B cell (primary cell): ENCODE measurements at regions of chr9 and their contacts with region 1.

Region 1: GRCh38 chr9:35657546-35658136 is at the start of gene RMRP:
- DNase-seq: peak; percentile 97
- ATAC-seq: peak; percentile 79
- H3K4me3 ChIP-seq: peak within 1 kb of the TSS; percentile 84 to 93 (median 87)
- H3K4me3 Mint-ChIP-seq: peak within 1 kb of the TSS; percentile 94
- H3K27ac ChIP-seq: peak within 1 kb of the TSS; percentile 99 to 100
- H3K27ac Mint-ChIP-seq: peak within 1 kb of the TSS; percentile 97
- H3K4me1 ChIP-seq: peaks cover 39 to 62% of the 10 kb centered on the region in 2 donors
- H3K4me1 Mint-ChIP-seq: peaks cover 66% of the 10 kb centered on the region
- H3K27me3 ChIP-seq: no peaks in the 10 kb centered on the region
- H3K27me3 Mint-ChIP-seq: no peaks in the 10 kb centered on the region
- CTCF ChIP-seq: no peak
- total RNA-seq, gene RMRP: 7,890 and 7,920 TPM in 2 replicates

Region 2: DNA sequence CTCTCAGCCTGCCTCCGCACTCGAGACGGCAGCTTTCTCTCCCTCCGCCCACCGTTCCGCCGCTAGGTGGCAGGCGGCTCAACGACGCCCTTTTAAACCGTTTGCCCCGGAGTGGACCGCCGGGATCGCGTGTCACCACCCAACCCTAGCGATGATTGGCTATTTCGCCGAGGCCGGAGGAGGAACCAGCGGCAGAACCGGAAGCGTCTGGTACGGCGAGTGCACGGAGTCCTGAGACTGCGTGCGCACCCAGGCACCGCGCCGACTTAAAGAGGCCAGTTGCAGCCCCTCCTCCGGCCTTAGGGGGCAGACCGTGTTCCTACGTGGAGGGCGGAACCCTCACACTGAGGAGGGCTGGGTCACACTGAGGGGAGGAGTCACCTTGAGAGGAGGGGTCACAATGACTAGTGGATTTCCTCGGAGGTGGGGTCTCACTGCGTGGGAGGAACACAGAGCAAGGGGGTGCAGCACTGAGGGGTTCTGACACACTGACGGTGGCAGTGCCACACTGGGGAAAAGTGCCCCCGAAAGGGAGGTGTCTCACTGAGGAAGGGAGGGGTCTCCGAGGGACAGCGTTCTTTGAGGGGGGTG is 53.6 kb before region 1 on chr9:
- CTCF ChIA-PET with region 1: interaction called, 357 read pairs
- POLR2A ChIA-PET with region 1: interaction called, 24 read pairs
- intact Hi-C with region 1: loop called (anchors 1 kb)
- DNase-seq: peak; percentile 100
- ATAC-seq: peak; percentile 86
- H3K4me3 ChIP-seq: peak overlapping the region; percentile 71 to 84 (median 81)
- H3K4me3 Mint-ChIP-seq: peak overlapping the region; percentile 97
- H3K27ac ChIP-seq: peak overlapping the region; percentile 80 to 84
- H3K27ac Mint-ChIP-seq: peak overlapping the region; percentile 99
- H3K4me1 ChIP-seq: peaks cover 26 to 46% of the 10 kb centered on the region in 2 donors
- H3K4me1 Mint-ChIP-seq: peaks cover 36% of the 10 kb centered on the region
- H3K27me3 ChIP-seq: no peaks in the 10 kb centered on the region
- H3K27me3 Mint-ChIP-seq: no peaks in the 10 kb centered on the region
- CTCF ChIP-seq: peak; percentile 97

Region 3: GRCh38 chr9:35616681-35617459 is 40.8 kb before region 1 on chr9:
- CTCF ChIA-PET with region 1: interaction called, 357 read pairs
- POLR2A ChIA-PET with region 1: interaction called, 18 read pairs
- intact Hi-C with region 1: loop called (anchors 1 kb)
- DNase-seq: peak; percentile 82
- ATAC-seq: peak; percentile 11
- H3K4me3 ChIP-seq: peak overlapping the region; percentile 80 to 91 (median 90)
- H3K4me3 Mint-ChIP-seq: peak overlapping the region; percentile 86
- H3K27ac ChIP-seq: peak overlapping the region; percentile 95 to 97
- H3K27ac Mint-ChIP-seq: peak overlapping the region; percentile 86
- H3K4me1 ChIP-seq: peaks cover 79 to 95% of the 10 kb centered on the region in 2 donors
- H3K4me1 Mint-ChIP-seq: peaks cover 94% of the 10 kb centered on the region
- H3K27me3 ChIP-seq: no peaks in the 10 kb centered on the region
- H3K27me3 Mint-ChIP-seq: no peaks in the 10 kb centered on the region
- CTCF ChIP-seq: peak; percentile 21

Region 4: GRCh38 chr9:35675732-35676392 is 18.2 kb after region 1 on chr9:
- CTCF ChIA-PET with region 1: interaction called, 10 read pairs
- POLR2A ChIA-PET with region 1: interaction called, 7 read pairs
- intact Hi-C with region 1: no loop called
- DNase-seq: peak; percentile 55
- ATAC-seq: peak; percentile 71
- H3K4me3 ChIP-seq: peak overlapping the region in 4 of 5 experiments; percentile 47 to 60 (median 52)
- H3K4me3 Mint-ChIP-seq: peak overlapping the region; percentile 87
- H3K27ac ChIP-seq: no peak overlapping the region
- H3K27ac Mint-ChIP-seq: no peak overlapping the region
- H3K4me1 ChIP-seq: peaks cover 21 to 29% of the 10 kb centered on the region in 2 donors
- H3K4me1 Mint-ChIP-seq: peaks cover 29% of the 10 kb centered on the region
- H3K27me3 ChIP-seq: peaks cover 0 to 14% (median 3%) of the 10 kb centered on the region in 4 experiments
- H3K27me3 Mint-ChIP-seq: peaks cover 9% of the 10 kb centered on the region
- CTCF ChIP-seq: no peak

Region 5: GRCh38 chr9:35696525-35697215 is 39.0 kb after region 1 on chr9:
- CTCF ChIA-PET with region 1: interaction called, 140 read pairs
- POLR2A ChIA-PET with region 1: interaction called, 11 read pairs
- intact Hi-C with region 1: loop called (anchors 1 kb)
- DNase-seq: peak; percentile 78
- ATAC-seq: peak; percentile 97
- H3K4me3 ChIP-seq: no peak overlapping the region
- H3K4me3 Mint-ChIP-seq: no peak overlapping the region
- H3K27ac ChIP-seq: no peak overlapping the region
- H3K27ac Mint-ChIP-seq: peak overlapping the region; percentile 79
- H3K4me1 ChIP-seq: peaks cover 0 to 7% of the 10 kb centered on the region in 2 donors
- H3K4me1 Mint-ChIP-seq: peaks cover 8% of the 10 kb centered on the region
- H3K27me3 ChIP-seq: no peaks in the 10 kb centered on the region
- H3K27me3 Mint-ChIP-seq: no peaks in the 10 kb centered on the region
- CTCF ChIP-seq: peak; percentile 91

Region 6: GRCh38 chr9:35756275-35757225 is 98.9 kb after region 1 on chr9:
- CTCF ChIA-PET with region 1: interaction called, 5 read pairs
- POLR2A ChIA-PET with region 1: interaction called, 10 read pairs
- intact Hi-C with region 1: no loop called
- DNase-seq: peak; percentile 84
- ATAC-seq: peak; percentile 80
- H3K4me3 ChIP-seq: peak overlapping the region; percentile 39 to 85 (median 81)
- H3K4me3 Mint-ChIP-seq: peak overlapping the region; percentile 93
- H3K27ac ChIP-seq: peak overlapping the region; percentile 92 to 94
- H3K27ac Mint-ChIP-seq: peak overlapping the region; percentile 97
- H3K4me1 ChIP-seq: peaks cover 34 to 44% of the 10 kb centered on the region in 2 donors
- H3K4me1 Mint-ChIP-seq: peaks cover 65% of the 10 kb centered on the region
- H3K27me3 ChIP-seq: no peaks in the 10 kb centered on the region
- H3K27me3 Mint-ChIP-seq: no peaks in the 10 kb centered on the region
- CTCF ChIP-seq: peak; percentile 70

Region 7: GRCh38 chr9:35882263-35882848 is 224.7 kb after region 1 on chr9:
- CTCF ChIA-PET with region 1: interaction called, 6 read pairs
- POLR2A ChIA-PET with region 1: no interaction called
- intact Hi-C with region 1: loop called (anchors 5 kb)
- DNase-seq: peak; percentile 84
- ATAC-seq: peak; percentile 66
- H3K4me3 ChIP-seq: no peak overlapping the region
- H3K4me3 Mint-ChIP-seq: no peak overlapping the region
- H3K27ac ChIP-seq: no peak overlapping the region
- H3K27ac Mint-ChIP-seq: no peak overlapping the region
- H3K4me1 ChIP-seq: no peaks in the 10 kb centered on the region
- H3K4me1 Mint-ChIP-seq: no peaks in the 10 kb centered on the region
- H3K27me3 ChIP-seq: peaks cover 0 to 3% (median 0%) of the 10 kb centered on the region in 4 experiments
- H3K27me3 Mint-ChIP-seq: peaks cover 17% of the 10 kb centered on the region
- CTCF ChIP-seq: peak; percentile 99